HCT116 (cell line): ENCODE measurements at regions of chr16 and their contacts with region 1.

Region 1: DNA sequence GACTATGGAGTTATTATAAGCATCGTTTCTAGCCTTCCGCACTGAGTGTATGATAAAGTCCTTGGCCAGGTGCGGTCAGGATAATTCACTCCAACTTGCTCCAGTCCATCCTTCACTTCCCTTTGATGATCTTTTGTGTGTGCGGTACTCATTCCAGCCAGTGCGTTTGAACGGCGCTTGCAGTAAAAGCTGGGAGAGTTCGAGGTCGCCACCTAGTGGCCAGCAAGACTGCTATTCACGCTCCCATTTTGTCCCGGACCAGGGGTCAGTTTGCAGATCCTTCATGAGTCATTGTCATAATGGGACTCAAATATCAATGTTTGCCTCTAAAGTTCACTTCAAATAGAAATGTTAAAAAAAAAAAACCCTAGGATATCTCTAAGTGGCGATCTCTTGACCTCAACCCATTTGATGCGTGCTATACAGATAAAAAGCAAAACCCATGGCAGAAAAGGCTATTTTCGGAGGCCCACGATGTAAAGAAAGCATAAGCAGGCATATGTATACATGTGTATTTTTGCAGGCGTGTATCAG is 417.1 kb downstream of the TMEM114 start:
- DNase-seq: peak; percentile 23
- ATAC-seq: peak; percentile 78
- H3K4me3 ChIP-seq: no peak overlapping the region
- H3K27ac ChIP-seq: no peak overlapping the region
- H3K4me1 ChIP-seq: no peaks in the 10 kb centered on the region
- H3K27me3 ChIP-seq: no peaks in the 10 kb centered on the region
- CTCF ChIP-seq: peak; percentile 59 to 88 (median 81); a peak in 5 of 6 replicates
- POLR2A ChIP-seq: no peak
- RAD21 ChIP-seq: peak; percentile 40; the same call in 1 of the 2 replicates

Region 2: GRCh38 chr16:7025616-7026190 is 1147.5 kb before region 1 on chr16:
- CTCF ChIA-PET with region 1: no interaction called
- POLR2A ChIA-PET with region 1: no interaction called
- RAD21 ChIA-PET with region 1: no interaction called
- intact Hi-C with region 1: loop called (anchors 5 kb)
- DNase-seq: no peak
- ATAC-seq: no peak
- H3K4me3 ChIP-seq: no peak overlapping the region
- H3K27ac ChIP-seq: no peak overlapping the region
- H3K4me1 ChIP-seq: no peaks in the 10 kb centered on the region
- H3K27me3 ChIP-seq: no peaks in the 10 kb centered on the region
- CTCF ChIP-seq: peak in 2 of 3 experiments; percentile 31 to 37; a peak in 2 of 6 replicates
- POLR2A ChIP-seq: no peak
- RAD21 ChIP-seq: 0 out of 2 replicates have a peak, but pooled peaks have one; percentile 11

Region 3: DNA sequence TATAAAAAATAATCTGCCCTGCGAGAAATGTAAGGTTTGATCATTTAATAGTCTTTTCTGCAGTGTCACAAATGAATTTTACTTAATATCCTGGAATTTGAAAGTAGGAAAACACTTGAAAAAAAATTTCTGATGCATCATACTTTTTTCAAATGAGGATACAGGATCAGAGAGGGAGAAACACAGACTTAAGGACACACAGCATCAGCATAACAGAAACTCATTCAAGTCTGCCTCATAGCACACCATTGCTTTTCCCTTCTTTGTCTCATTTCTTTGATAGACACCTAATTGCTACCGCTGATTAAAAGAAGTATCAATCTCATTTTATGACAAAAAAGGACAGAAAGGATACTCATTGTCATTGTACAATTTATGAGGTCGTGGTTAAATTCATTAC is 98.2 kb after region 1 on chr16:
- CTCF ChIA-PET with region 1: no interaction called
- POLR2A ChIA-PET with region 1: no interaction called
- RAD21 ChIA-PET with region 1: no interaction called
- intact Hi-C with region 1: no loop called
- DNase-seq: no peak
- ATAC-seq: no peak
- H3K4me3 ChIP-seq: no peak overlapping the region
- H3K27ac ChIP-seq: no peak overlapping the region
- H3K4me1 ChIP-seq: no peaks in the 10 kb centered on the region
- H3K27me3 ChIP-seq: no peaks in the 10 kb centered on the region
- CTCF ChIP-seq: no peak
- POLR2A ChIP-seq: no peak
- RAD21 ChIP-seq: no peak